ENCODE measurements at regions of chrX and their contacts with region 1.

Region 1: DNA sequence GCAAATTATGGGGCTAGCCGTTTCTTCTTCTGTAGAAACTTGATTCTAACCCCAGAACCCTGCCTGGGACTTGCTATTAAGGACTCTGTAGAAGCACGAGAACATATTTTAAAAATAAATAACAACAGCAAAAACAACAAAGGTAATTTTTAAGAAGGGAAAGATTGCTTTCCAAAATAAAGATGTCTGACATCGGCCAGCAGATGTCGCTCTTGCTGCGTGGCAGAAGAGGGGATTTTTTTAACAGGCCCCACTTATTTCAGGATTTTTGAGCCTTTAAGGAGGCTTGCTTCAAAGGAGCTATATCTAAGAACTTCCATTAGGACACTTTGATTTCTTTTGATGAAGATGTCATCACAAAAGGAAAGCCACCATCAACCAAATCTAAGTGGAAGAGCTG is 62.8 kb upstream of the EGFL6 start:
- DNase-seq: peak; percentile 48
- ATAC-seq: no peak

Region 2: GRCh38 chrX:13305108-13305507 is 201.5 kb before region 1 on chrX:
- intact Hi-C with region 1: no loop called
- DNase-seq: no peak
- ATAC-seq: no peak

Region 3: GRCh38 chrX:13645464-13646153 is 139.0 kb after region 1 on chrX:
- intact Hi-C with region 1: loop called (anchors 2 kb)
- DNase-seq: no peak
- ATAC-seq: no peak

Region 4: DNA sequence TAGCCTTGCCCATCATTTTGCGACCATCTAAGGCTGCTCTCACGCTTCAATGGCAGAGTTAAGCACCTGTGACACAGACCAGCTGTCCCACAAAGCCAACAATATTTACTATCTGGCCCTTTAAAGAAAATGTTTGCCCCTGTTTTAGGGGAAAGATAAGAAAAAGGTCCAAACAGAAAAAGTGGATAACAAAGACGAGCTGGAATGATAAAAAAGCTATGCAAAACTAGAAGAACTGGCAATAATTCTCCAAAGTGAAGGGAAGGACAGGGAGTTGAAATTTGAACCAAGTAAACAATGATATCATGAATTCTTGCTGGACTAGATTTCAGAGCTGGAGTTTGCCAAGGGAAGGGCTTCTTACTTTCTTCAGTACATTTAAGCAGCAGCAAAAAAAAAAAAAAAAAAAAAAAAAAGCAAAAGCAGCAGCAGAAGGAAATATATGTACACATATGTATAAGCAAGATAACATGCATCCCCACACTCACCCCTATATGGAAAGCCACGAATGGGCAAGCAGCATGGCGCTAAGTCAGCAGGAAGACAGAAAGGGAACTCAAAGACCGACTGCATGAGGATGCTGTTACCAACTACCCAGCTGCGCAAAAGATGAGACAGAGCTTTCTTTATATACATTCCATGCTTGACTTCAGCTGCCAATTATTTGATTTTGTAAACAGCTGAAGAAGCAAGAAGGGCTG is 215.4 kb after region 1 on chrX:
- intact Hi-C with region 1: no loop called
- DNase-seq: no peak
- ATAC-seq: peak; percentile 58

Measured in Right ventricle myocardium superior (tissue), 1 donor.